MCF 10A (cell line): ENCODE measurements at regions of chr7 and their contacts with region 1.

Region 1: GRCh38 chr7:25389489-25390106 is 161.3 kb upstream of the NPVF start:
- DNase-seq: peak; percentile 61
- H3K4me3 Mint-ChIP-seq: no peak overlapping the region
- H3K27ac Mint-ChIP-seq: no peak overlapping the region
- H3K4me1 Mint-ChIP-seq: no peaks in the 10 kb centered on the region
- H3K27me3 Mint-ChIP-seq: peaks cover 96% of the 10 kb centered on the region
- CTCF ChIP-seq: peak; percentile 62

Region 2: GRCh38 chr7:25069900-25070443 is 319.6 kb before region 1 on chr7:
- CTCF ChIA-PET with region 1: no interaction called
- POLR2A ChIA-PET with region 1: no interaction called
- intact Hi-C with region 1: no loop called
- DNase-seq: peak; percentile 70
- H3K4me3 Mint-ChIP-seq: no peak overlapping the region
- H3K27ac Mint-ChIP-seq: no peak overlapping the region
- H3K4me1 Mint-ChIP-seq: peaks cover 8% of the 10 kb centered on the region
- H3K27me3 Mint-ChIP-seq: no peaks in the 10 kb centered on the region
- CTCF ChIP-seq: peak; percentile 85

Region 3: DNA sequence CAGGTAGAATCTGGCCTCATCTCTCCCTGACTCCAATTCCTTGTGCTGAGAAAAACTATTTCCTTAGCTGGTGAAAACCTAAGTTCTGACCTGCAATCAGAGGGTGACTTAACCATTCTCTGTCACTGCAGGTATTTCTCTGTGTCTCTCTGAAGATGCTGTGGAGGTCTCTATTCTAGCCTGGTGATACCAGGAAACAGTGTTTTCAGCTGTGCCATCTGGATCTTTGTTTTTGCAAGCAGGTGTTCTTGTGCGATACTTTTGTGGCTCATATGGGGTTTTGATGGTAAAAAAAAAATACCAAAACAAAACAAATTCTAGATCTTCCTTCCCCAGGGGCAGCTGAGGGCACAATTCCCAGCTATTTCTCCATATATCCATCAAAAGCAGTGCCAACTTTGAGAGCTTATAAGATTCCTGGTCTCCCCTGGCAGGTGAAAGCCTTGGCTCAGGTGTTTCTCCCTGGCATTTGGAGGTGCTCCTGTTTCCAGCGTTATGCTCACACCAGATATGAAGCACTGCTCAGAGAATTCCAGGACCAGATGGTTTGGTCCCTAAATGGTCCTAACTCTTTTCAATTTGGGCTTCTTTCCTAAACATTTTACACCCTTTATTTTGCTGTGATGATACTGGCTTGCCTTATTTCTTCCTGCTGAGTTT is 151.4 kb before region 1 on chr7:
- CTCF ChIA-PET with region 1: no interaction called
- POLR2A ChIA-PET with region 1: no interaction called
- intact Hi-C with region 1: no loop called
- DNase-seq: no peak
- H3K4me3 Mint-ChIP-seq: no peak overlapping the region
- H3K27ac Mint-ChIP-seq: no peak overlapping the region
- H3K4me1 Mint-ChIP-seq: no peaks in the 10 kb centered on the region
- H3K27me3 Mint-ChIP-seq: peaks cover 61% of the 10 kb centered on the region
- CTCF ChIP-seq: no peak

Region 4: GRCh38 chr7:25250386-25250785 is 139.2 kb before region 1 on chr7:
- CTCF ChIA-PET with region 1: interaction called, 36 read pairs
- POLR2A ChIA-PET with region 1: no interaction called
- intact Hi-C with region 1: no loop called
- DNase-seq: no peak
- H3K4me3 Mint-ChIP-seq: no peak overlapping the region
- H3K27ac Mint-ChIP-seq: no peak overlapping the region
- H3K4me1 Mint-ChIP-seq: no peaks in the 10 kb centered on the region
- H3K27me3 Mint-ChIP-seq: peaks cover 66% of the 10 kb centered on the region
- CTCF ChIP-seq: no peak

Region 5: DNA sequence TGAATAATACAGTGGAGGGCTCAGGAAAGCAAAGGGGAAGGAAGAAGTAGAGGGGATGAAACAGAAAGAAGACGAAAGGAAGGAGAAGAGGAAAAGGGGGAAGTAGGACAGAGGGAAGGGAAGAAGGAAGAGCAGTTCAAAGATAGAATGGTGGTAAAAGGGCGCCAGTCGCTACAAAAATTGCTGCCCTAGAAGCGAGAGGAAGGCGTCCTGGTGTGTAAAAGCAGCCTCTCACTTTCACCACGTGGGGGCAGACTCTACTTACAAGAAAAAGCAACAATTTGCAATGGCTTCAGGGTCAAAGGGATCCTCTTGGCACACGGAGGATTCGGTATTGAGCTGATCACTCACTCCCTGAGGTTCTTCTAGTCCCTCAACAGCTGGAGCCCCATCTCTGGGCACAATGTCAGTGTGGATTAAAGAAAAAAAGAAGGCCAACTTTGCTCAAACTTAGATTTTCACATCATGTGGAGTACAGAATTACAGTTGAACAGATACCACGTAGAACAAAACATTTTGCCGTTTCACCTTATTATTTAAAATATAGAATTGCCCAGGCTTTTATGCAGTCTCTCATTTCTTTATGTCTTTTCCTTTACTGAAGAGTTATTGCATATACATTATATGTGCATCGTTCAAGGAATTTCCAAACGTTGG is 129.9 kb before region 1 on chr7:
- CTCF ChIA-PET with region 1: interaction called, 96 read pairs
- POLR2A ChIA-PET with region 1: interaction called, 3 read pairs
- intact Hi-C with region 1: loop called (anchors 1 kb)
- DNase-seq: peak; percentile 83
- H3K4me3 Mint-ChIP-seq: no peak overlapping the region
- H3K27ac Mint-ChIP-seq: no peak overlapping the region
- H3K4me1 Mint-ChIP-seq: peaks cover 9% of the 10 kb centered on the region
- H3K27me3 Mint-ChIP-seq: peaks cover 71% of the 10 kb centered on the region
- CTCF ChIP-seq: peak; percentile 89

Region 6: DNA sequence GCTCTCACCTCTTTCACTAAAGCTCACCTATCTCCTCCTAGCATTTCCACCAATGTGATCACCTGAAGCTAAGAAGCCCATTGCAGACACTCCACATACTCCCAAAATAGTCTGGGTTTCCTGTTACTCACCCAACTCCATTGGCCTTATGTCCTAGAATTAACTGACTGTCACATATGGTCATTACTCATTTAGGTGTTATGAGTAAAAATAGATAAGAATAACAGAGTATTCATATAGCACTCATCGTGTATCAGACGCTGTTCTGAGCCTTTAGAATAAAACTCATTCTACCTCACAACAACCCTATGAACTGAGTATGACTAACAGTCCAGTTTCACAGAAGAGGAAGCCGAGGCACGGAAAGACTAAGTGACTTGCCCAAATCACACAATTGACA is 12.9 kb after region 1 on chr7:
- CTCF ChIA-PET with region 1: interaction called, 14 read pairs
- POLR2A ChIA-PET with region 1: no interaction called
- intact Hi-C with region 1: no loop called
- DNase-seq: no peak
- H3K4me3 Mint-ChIP-seq: no peak overlapping the region
- H3K27ac Mint-ChIP-seq: no peak overlapping the region
- H3K4me1 Mint-ChIP-seq: no peaks in the 10 kb centered on the region
- H3K27me3 Mint-ChIP-seq: peaks cover 80% of the 10 kb centered on the region
- CTCF ChIP-seq: no peak